ENCODE measurements at regions of chr14 and their contacts with region 1.

Region 1: GRCh38 chr14:102304611-102305509 is at the start of gene MOK:
- DNase-seq: peak; percentile 86 to 98 (median 94)

Region 2: DNA sequence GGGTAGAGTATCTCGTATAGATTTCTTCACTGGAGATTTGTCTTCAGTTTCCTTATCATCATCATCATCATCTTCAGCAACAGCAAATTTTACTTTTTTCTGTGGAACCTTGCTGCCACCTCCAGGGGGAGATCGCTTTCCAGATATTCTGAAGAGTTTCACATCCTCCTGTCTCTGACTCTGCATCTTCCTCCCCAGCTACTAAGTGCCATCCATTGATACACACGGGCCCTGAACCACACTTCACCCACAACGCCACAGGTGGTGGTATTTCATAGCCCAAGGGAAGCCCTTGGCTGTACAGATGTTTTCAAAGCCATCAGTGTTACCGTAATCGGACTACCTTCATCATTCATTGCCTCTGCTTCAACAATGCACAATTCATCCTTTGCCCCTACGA is 461.2 kb before region 1 on chr14:
- intact Hi-C with region 1: no loop called
- DNase-seq: peak in 6 of 42 donors; percentile 31 to 67 (median 43)

Region 3: DNA sequence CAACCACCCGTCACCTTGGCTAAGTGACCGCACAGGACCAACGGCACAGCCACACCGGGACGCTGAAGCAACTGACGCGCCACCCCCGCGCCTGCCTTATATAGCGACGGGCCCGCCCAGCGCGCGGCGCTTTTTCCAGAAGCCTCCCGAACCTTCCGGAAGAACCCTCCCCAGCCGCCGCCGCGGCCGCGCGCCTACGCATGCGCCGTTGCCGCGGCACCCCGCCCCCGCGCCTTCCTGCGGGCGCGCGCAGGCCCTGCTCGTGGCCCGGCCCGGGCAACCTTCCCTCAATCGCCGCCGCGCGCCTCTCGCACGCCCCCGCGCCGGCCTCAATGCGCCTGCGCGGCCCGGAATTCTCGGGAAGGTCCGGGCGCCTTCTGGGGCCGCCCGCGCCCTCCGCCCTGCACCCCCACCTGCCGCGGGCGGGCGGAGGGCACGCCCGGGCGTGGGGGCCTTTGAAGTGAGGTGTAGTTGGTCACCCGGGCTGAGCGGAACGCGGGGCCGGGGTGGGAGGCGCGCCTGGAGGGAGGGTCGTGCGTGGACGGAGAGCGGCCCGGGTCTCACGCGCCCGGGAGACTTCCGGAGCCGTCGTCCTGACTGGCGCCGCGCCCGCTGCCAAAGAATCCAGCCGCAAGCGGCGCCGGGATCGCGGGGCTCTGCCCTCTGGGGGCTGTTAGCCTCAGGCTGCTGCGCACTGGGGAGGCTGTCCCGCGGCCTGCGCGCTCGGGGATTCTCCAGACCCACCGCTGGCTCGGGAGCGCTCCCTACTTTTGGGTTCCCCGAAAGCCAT is 217.7 kb before region 1 on chr14 and contains the start of gene HSP90AA1:
- intact Hi-C with region 1: loop called (anchors 5 kb)
- DNase-seq: peak; percentile 81 to 97 (median 93)

Region 4: DNA sequence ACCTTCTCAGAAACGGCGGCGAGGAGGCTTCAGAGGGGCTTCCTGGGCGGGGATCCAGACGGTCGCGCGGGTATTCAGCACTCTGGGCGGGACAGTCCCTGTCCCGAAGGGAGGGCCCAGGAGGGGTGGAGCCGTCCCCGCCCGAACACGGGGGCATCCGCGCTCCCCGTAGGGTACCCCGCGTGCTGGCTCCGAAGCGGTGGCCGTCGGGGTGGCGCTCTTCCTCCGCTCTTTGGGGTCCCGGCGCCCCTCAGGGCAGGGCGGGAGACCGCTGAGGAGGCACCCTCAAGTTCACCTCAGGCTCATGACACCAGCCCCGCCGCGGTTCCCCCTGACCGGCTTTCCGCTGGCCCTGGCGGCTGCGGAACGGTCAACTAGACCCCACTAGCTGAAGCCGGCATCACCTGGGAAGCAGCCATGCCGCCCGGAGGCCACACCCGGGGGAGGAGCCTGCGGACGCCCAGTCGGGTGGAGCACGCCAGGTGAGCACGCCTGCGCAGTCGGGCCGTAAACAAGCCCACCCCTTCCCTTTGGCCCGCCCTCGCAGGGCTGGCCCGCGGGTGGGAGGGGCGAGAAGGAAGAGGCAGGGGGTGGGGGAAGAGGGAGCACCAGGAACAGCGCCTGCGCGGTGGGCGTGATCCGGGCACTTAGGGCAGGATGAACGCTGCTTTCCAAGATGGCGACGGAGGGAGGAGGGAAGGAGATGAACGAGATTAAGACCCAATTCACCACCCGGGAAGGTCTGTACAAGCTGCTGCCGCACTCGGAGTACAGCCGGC is 165.4 kb before region 1 on chr14 and contains the start of gene WDR20:
- intact Hi-C with region 1: loop called (anchors 5 kb)
- DNase-seq: peak; percentile 94 to 100 (median 98)

Region 5: DNA sequence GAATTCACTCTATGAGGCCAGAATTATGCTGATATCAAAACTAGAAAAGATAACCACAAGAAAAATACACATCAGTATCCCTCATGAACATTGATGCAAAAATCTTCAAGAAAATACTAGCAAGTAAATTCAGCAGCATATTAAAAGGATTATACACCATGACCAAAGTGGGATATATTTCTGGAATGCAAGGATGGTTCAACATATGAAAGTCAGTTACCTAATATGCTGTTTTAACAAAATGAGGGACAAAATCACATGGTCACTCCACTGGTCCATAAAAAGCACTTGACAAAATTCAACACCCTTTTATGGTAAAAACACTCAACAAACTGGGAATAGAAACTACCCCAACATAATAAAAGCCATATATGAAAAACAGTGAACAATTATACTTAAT is 98.2 kb after region 1 on chr14:
- intact Hi-C with region 1: no loop called
- DNase-seq: no peak

Measured in head of caudate nucleus (tissue), 42 donors.